Right ventricle myocardium inferior (tissue), 1 donor: ENCODE measurements at regions of chr1 and their contacts with region 1.

Region 1: DNA sequence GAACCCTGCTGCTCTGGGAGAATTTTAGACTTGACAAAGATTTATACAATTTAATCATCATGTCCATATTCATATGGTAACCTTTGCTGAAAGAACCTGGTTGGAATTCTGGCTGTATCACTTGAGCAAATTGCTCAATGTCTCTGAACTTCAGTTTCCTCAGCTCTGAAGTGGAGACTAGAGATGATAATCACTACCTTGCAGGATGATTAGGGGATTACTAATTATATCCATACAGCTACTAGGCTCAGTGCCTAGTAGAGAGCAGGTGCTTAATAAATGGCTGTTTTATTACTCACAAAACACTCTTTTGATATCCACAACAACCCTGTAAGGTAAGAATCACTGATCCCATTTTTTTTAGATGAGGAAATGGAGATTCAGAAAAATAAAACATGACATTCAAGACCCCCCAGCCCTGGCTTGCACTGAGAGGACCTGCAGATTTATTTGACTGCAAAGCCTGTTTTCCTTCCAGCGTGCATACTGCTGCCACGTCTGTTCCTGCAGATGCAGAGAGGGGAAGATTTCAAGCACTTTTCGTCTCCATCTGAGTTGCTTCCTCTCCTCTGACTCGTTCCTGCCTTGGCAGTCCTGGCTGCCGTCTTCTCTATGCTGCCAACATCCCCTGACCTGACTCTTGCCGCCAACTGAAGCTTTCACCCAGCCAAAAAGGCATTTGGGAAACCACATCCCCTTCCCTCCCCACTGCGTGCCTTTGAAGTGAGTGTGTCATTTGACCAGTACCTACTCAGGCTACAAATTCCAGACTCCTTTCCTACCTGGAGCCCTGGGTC is 203.0 kb downstream of the PLPP3 start:
- DNase-seq: peak; percentile 62
- ATAC-seq: peak; percentile 39

Region 2: DNA sequence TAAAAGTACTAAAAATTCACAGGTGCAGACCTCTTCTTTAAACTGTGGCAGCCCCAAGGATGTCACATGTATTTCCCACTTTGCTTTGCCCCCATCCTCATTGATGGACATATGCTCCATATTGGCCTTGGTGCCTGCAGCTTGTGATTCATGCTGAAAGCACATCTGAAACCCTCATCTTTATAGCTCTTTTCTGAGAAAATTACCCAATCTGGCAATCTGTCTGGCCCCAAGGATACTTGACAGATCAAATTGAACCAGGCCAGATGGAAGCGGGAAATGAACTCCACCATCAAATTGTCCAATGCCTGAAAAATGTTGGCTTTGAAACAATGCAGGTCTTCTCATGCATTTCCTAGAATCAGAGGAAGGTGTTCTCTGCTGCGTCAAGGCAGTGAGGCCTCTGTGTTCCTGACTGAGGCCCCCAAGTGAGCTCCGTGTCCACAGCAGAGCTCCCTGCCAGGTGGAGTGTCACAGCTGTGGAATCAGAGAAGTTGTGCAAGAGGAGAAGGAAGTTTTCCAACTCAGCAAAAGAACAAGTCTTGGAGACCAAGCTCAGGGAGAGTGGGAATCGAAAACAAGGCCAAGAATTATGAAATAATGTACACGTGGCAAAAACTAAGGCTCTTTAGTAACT is 120.8 kb before region 1 on chr1:
- intact Hi-C with region 1: no loop called
- DNase-seq: peak; percentile 87
- ATAC-seq: peak; percentile 95

Region 3: DNA sequence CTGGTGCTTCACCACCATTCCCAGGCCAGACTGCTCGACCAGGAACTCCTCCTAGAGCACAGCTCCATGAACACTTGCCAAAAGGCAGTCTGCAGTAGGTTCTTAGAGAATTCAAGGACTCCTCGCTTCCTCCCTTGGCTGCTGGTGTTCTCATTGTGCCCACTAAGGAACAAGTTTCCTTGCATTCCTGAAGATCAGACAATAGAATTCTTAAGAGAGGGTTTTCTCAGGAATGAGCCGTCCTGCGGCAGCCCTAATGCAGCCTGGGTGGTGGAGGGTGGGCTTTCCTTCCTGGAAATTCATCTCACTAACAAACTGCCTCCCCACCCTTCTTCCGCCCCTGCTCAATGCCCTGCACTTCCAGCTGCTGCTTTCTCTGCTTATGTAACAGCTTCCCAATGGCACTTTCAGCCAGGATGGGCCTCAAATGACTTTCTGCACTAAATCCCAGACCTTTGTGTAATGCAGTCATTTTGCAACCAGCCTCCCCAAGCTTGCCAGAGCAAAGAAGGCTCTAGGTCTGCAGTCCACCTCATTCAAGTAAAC is 84.9 kb before region 1 on chr1:
- intact Hi-C with region 1: no loop called
- DNase-seq: peak; percentile 76
- ATAC-seq: peak; percentile 83

Region 4: GRCh38 chr1:56434740-56435139 is 58.4 kb after region 1 on chr1:
- intact Hi-C with region 1: loop called (anchors 5 kb)
- DNase-seq: no peak
- ATAC-seq: no peak